ENCODE measurements at regions of chr5 and their contacts with region 1.

Region 1: DNA sequence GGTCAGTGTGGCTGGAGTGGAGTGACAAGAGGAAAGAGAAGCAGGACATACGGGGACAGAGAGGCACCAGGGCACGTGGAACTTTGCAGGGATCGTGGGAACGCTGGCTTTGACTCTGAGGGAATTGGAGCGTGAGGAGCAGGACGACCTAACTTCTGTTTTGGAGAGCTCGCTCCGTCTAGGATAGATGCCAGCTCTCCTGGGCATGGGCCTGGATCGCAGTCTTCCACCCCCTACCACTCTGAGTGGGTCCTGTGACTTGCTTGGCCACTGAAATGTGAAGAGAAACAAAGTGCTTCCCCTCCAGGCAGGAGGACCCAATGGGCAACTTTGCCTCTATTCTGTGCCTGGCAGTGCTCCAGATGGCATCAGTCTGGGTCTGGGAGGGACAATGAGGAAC is 8.7 kb upstream of the SH3PXD2B start:
- DNase-seq: no peak
- H3K4me3 ChIP-seq: no peak overlapping the region
- CTCF ChIP-seq: no peak

Region 2: DNA sequence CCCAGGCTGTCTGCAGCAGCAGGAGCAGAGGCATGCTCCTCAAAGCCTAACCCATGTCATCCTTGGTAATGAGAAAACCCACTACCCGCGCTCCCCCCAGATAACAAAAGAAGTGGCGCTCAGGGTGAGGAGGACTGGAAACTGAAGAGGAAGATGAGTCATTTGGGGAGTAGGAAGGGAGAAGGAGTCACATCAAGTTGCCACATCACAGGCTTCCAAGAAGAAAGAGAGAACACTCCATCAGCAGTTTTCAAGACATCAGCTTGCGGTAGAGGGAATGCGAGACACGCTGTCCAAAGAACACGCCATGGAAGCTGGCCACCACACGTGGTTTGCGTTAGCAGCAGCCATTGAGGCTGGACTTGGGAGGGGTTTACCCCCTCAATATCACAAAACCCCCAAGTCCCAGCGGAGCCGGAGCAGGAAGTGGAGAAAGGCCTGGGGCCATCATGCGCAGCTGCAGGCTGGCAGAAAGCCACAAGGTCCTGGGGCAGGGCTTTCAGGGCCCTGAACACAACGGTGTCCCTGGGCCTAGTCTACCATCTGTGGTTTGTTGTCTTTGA is 50.2 kb before region 1 on chr5:
- in situ Hi-C with region 1: no loop called
- DNase-seq: peak; percentile 93
- H3K4me3 ChIP-seq: no peak overlapping the region
- CTCF ChIP-seq: no peak

Region 3: GRCh38 chr5:172740428-172741201 is 277.6 kb after region 1 on chr5:
- in situ Hi-C with region 1: no loop called
- DNase-seq: peak; percentile 92
- H3K4me3 ChIP-seq: no peak overlapping the region
- CTCF ChIP-seq: no peak

Region 4: GRCh38 chr5:172910828-172911627 is 448.0 kb after region 1 on chr5:
- in situ Hi-C with region 1: no loop called
- DNase-seq: no peak
- H3K4me3 ChIP-seq: no peak overlapping the region
- CTCF ChIP-seq: peak; percentile 29

Region 5: DNA sequence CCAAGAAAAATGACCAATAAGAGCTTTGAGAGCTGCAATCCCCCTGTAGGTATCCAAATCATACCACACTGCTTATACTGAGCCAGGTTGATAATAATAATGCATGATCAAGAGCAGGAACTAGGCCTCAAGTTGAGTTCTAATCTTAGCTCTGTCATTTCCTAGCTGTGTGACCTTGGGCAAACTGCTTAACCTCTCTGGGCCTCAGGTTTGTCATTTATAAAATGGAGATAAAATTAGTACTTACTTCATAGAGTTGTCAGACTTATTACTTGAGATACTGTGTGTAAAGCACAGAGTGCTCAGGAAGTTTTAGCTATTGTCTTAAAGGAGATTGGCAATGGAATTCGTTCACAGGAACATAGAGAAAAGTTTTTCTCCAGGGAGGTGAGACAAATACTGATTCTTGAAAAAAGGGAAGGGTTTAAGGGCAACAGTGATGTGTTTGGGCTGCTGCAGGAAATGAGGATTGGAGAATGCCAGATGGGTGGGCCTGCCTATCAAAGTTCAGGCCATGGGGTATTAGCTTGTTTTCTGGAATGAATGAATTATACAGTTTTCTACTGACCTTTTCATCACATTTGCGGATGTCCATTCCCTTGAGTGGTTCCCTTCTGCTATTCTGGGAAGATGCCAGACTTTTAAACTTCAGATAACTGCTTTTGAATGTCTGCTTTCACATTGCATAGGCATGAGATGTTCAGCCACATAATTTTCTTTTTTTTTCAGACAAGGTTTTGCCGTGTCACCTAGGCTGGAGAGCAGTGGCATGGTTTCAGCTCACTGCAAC is 510.3 kb after region 1 on chr5:
- in situ Hi-C with region 1: loop called (anchors 10 kb)
- DNase-seq: no peak
- H3K4me3 ChIP-seq: no peak overlapping the region
- CTCF ChIP-seq: no peak

Region 6: GRCh38 chr5:173099461-173099860 is 636.4 kb after region 1 on chr5:
- in situ Hi-C with region 1: no loop called
- DNase-seq: no peak
- H3K4me3 ChIP-seq: no peak overlapping the region
- CTCF ChIP-seq: no peak

Measured in astrocyte of the cerebellum (primary cell).